AG04449 (cell line): ENCODE measurements at regions of chr1 and their contacts with region 1.

Region 1: DNA sequence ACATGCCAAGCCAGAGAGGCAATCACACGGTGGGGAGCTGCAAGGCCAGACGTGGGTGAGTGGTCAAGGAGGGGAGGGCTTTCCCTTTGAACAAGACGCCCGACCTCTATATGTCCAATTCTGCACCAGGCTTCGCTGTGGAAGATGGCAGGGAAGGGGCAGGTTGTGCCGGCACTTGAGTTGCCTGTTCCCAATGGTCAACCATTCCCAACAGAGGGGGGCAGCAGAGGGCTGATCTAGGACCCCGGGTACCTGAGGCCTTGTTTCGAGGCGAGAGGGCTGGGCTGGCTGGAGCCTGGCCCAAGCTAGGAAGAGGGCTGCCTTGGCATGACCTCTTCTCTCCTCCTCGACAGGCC is 64.9 kb downstream of the TMEM53 start:
- DNase-seq: no peak
- H3K4me3 ChIP-seq: no peak overlapping the region
- CTCF ChIP-seq: peak; percentile 79

Region 2: GRCh38 chr1:44660176-44660575 is 50.8 kb after region 1 on chr1:
- CTCF ChIA-PET with region 1: interaction called, 57 read pairs
- POLR2A ChIA-PET with region 1: no interaction called
- DNase-seq: no peak
- H3K4me3 ChIP-seq: no peak overlapping the region
- CTCF ChIP-seq: no peak

Region 3: GRCh38 chr1:44792783-44793714 is 183.7 kb after region 1 on chr1:
- CTCF ChIA-PET with region 1: no interaction called
- POLR2A ChIA-PET with region 1: no interaction called
- DNase-seq: no peak
- H3K4me3 ChIP-seq: no peak overlapping the region
- CTCF ChIP-seq: no peak

Region 4: DNA sequence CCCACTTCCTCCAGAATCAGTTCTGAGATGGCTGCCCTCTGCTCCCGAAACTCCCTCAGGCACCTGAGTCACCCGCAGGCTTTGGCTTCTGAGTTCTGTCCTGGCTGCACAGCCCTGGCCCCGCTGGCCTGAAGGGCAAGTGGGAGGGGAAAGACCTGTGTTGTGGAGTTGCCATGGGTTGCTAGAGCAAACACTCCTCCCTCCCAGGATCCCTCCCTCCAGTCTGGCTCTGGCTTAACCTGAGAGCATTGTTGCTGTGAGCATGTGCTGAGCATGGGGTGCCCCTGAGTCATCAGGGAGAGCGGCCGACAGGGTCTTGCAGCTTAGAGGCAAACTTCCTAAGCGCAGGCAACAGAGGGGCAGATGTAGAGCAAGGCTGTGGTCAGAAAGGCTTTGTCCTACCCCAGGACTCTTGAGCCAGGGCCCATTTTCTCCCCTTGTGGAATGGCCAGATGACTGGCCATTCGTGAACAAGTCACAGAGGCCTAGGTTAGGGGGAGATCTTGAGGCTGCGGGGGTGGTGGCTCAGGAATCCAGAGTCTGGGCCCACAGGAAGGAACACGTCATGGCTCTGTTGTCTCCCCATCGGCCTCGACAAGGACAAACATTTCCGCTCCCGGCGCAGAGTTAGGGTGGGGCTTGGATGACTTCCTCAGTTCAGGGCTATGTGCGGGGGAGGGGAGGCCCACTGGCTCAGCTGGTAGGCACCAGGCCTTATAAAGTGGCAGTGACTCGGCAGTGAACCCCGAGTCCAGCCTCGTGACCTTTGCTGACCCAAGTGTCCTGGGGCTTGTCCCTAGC is 198.1 kb after region 1 on chr1 and contains the start of gene DYNLT4:
- CTCF ChIA-PET with region 1: no interaction called
- POLR2A ChIA-PET with region 1: no interaction called
- DNase-seq: peak; percentile 98
- H3K4me3 ChIP-seq: peak within 1 kb of the TSS; percentile 33
- CTCF ChIP-seq: no peak